ENCODE measurements at regions of chr6 and their contacts with region 1.

Region 1: DNA sequence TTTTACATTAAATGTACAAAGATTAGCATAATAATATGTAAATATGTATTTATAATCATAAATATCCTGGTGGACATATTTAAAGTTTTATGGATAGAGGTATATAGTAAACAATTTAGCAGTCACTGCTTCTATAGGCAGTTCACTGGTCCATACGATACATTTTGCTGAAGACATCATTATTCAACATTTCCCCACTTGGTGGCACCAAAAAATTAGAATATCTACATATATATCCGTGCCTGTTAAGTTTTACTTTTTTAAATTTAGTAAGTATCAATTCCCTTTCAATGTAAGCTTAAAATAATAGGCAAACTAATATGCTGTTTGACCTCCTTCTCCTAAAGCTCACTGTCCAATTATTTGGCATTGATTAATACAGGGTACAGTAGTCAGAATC is 64.2 kb downstream of the LMBRD1 start:
- DNase-seq: no peak
- ATAC-seq: peak; percentile 64
- H3K4me3 Mint-ChIP-seq: no peak overlapping the region
- H3K27ac Mint-ChIP-seq: no peak overlapping the region
- H3K4me1 Mint-ChIP-seq: peaks cover 13% of the 10 kb centered on the region
- H3K27me3 Mint-ChIP-seq: no peaks in the 10 kb centered on the region
- CTCF ChIP-seq: no peak

Region 2: GRCh38 chr6:69719602-69720193 is 12.9 kb before region 1 on chr6:
- CTCF ChIA-PET with region 1: interaction called, 4 read pairs
- POLR2A ChIA-PET with region 1: no interaction called
- intact Hi-C with region 1: loop called (anchors 2 kb)
- DNase-seq: no peak
- ATAC-seq: no peak
- H3K4me3 Mint-ChIP-seq: no peak overlapping the region
- H3K27ac Mint-ChIP-seq: no peak overlapping the region
- H3K4me1 Mint-ChIP-seq: peaks cover 7% of the 10 kb centered on the region
- H3K27me3 Mint-ChIP-seq: no peaks in the 10 kb centered on the region
- CTCF ChIP-seq: no peak

Region 3: DNA sequence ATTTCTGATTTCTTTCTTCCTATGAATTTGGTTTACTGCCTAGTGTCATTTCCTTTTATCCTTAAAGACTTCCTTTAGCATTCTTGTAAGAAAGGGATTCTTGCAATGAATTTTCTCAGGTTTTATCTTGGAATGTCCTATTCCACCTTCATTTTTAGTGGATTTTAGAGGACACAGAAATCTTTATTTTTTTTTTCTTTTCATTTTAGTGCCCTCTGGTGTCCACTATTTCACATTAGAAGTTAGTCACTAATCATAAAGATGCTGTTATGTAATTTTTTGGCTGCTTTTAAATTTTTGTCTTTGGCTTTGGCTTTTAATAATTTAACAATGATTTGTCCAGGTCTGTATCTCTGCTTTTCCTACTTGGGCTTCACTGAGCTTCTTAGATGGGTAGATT is 36.0 kb after region 1 on chr6:
- CTCF ChIA-PET with region 1: no interaction called
- POLR2A ChIA-PET with region 1: no interaction called
- intact Hi-C with region 1: loop called (anchors 5 kb)
- DNase-seq: no peak
- ATAC-seq: no peak
- H3K4me3 Mint-ChIP-seq: no peak overlapping the region
- H3K27ac Mint-ChIP-seq: no peak overlapping the region
- H3K4me1 Mint-ChIP-seq: peaks cover 55% of the 10 kb centered on the region
- H3K27me3 Mint-ChIP-seq: no peaks in the 10 kb centered on the region
- CTCF ChIP-seq: no peak

Region 4: DNA sequence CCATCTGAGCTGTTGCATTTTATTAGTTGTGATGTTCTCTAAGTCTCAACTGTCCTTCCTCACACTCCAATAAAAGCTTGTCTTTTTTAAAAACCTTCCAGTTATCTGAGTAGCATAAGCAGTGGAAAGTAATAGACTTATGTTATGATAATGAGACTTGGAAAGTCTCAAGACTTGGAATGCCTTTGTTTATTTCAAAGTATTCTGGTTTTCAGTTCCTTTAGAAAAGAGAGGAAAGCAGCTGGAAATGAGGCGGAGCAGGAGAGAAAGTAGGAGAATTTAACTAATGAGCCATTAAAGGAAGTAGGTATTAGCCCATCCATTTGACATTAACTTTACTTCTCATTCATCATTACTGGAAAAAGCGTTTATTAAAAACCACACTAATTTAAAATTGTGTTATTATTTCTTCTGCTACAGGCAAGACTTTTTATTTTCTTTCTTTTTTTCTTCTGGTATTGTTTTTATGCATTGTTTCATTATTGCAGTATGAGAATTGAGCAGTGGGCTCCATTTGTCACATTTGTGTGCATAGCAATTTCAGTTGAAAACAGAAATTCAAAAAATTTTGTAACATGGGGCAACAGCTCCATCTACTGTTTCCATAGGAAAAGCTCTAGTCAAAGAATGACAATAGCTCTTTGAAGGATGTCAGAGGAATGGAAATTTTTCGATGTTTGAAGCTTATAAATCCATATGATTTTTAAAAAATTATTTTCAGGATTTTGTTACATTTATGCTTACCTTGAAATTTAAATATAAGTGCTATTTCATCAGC is 375.4 kb after region 1 on chr6:
- CTCF ChIA-PET with region 1: interaction called, 39 read pairs
- POLR2A ChIA-PET with region 1: no interaction called
- intact Hi-C with region 1: loop called (anchors 1 kb)
- DNase-seq: no peak
- ATAC-seq: no peak
- H3K4me3 Mint-ChIP-seq: no peak overlapping the region
- H3K27ac Mint-ChIP-seq: no peak overlapping the region
- H3K4me1 Mint-ChIP-seq: peaks cover 8% of the 10 kb centered on the region
- H3K27me3 Mint-ChIP-seq: no peaks in the 10 kb centered on the region
- CTCF ChIP-seq: peak; percentile 80

Region 5: DNA sequence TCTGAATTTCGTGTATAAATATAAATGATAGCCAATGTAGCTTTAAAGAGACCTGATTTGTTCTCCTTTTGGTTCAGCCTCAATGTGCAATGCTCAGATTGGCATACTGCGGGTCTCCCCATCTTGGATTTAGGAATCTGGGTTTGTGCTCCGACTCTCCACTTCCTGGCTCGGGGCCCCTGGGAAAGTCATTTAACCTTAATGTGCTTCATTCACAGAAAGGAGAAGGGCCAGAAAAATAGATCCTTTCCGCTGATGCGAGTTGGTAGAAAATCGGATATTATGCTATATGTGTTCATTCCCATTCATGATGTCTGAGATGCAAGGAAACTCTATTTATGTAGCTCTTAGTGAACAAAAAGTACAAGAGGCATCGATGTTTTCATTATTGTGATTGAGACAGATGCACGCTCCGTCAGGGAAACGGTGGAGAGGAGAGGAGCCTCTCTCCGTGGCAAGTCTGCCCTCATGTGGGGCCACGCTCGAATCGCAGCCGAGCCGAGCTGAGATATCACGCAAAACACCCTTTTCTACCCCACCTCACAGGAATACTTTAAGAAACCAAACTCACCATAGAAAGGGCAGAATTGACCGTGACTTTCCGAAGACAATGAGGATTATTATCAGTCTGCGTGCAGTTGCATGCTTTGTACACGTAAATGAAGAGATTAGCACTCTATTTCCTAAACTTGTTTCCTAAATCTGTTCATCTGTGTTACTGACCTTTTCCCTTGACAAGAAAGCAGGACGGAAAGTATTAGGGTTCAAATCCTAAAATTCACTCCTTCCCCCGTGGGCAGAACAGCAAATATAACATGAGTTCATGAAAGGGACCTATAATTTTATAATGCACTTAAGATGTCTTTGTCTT is 433.7 kb after region 1 on chr6:
- CTCF ChIA-PET with region 1: interaction called, 3 read pairs
- POLR2A ChIA-PET with region 1: no interaction called
- intact Hi-C with region 1: loop called (anchors 2 kb)
- DNase-seq: no peak
- ATAC-seq: peak; percentile 52
- H3K4me3 Mint-ChIP-seq: no peak overlapping the region
- H3K27ac Mint-ChIP-seq: peak overlapping the region; percentile 4
- H3K4me1 Mint-ChIP-seq: no peaks in the 10 kb centered on the region
- H3K27me3 Mint-ChIP-seq: no peaks in the 10 kb centered on the region
- CTCF ChIP-seq: no peak